Activated T-helper 1 cell treated with anti-CD3 and anti-CD28 coated beads, Interleukin-12 subunit alpha, Interleukin-12 subunit beta, Interleukin-2, Interleukin-4 antibody, amounts not matched to agents 30 ng/mL and 10 ng/mL and 1 ng/mL, durations not matched to agents 14 hours and 24 hours and 36 hours (primary cell): ENCODE measurements at regions of chr4 and their contacts with region 1.

Region 1: DNA sequence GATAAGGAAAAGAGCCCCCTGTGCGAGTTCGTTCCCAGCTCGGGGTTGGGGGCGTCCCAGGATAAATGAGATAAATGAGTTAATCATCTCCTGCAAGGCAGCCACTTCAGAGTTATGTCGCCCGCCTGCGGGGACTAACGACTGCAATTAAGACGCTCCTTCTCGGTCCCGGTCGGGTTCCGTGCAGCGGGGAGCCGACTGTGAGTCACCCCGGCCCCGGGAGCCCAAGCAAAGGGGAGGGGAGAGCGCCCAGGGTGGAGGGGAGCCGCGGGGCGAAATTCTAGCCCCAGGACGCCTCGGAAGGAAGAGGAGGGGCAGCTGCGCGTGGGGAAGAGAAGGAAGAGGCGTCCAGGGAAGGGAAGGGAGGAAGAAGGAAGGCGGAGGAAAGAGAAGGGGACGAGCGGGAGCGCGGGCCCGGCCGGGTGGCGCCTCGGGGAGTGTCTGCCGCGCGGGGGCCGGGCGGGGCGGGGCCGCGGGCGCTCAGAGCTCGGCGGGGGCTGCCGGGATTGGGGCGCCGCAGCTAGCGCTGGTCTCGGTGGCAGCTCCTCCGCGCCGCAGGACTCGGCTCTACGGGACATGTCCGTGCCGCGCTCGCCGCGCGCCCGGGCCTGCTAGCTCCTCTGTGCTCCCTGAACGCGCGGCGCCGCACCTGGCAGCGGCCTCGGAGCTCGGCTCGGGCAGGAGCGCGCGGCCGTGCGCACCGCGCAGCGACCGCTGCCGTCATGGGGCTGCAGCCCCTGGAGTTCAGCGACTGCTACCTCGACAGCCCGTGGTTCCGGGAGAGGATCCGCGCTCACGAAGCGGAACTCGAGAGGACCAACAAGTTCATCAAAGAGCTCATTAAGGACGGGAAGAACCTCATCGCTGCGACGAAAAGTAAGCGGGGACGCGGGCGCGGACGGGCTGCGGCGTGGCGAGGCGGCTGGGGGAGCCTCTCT is at the start of gene ARHGAP10:
- DNase-seq: peak; percentile 49
- H3K4me3 Mint-ChIP-seq: peak within 1 kb of the TSS; percentile 93
- H3K27ac Mint-ChIP-seq: peak within 1 kb of the TSS; percentile 84
- H3K4me1 Mint-ChIP-seq: peaks cover 45% of the 10 kb centered on the region
- H3K27me3 Mint-ChIP-seq: peaks cover 37% of the 10 kb centered on the region
- total RNA-seq, gene ARHGAP10: 7.4 and 8.6 TPM in 2 replicates

Region 2: DNA sequence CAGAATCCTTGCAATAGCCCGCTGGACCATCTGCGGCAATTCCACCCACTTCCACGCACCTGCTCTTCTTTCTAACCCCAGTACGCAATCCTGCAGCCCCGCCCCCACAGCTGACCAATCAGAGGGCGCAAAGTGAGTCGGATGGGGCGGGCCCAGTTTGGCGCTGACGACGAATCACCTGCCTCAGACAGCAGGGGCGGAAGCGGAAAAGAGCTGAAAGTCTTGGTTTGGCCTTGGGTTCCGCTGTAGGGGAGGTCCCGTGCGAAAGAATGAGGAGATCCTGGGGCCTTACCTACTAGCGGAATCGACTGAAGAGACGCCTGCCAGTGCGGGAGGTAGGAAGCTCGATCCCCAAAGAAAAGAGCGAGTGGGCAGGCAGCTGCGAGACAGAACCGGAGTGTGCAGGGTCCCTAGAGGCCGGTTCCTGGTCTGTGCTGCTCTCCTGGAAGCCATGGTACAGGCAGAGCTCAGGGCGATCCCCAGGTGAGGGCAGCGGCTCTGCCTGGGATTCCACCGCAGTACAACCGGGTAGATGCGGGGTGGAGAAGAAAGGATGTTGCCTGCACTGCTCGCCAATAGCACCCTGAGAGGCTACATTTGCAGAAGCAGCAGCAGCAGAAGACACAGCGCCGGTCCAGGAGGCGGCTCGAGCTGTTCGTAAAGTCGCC is 114.5 kb before region 1 on chr4 and contains the start of gene TMEM184C:
- intact Hi-C with region 1: loop called (anchors 1 kb)
- DNase-seq: peak; percentile 97
- H3K4me3 Mint-ChIP-seq: peak within 1 kb of the TSS; percentile 92
- H3K27ac Mint-ChIP-seq: peak within 1 kb of the TSS; percentile 89
- H3K4me1 Mint-ChIP-seq: peaks cover 26% of the 10 kb centered on the region
- H3K27me3 Mint-ChIP-seq: peaks cover 7% of the 10 kb centered on the region
- total RNA-seq, gene TMEM184C: 21.6 and 22.7 TPM in 2 replicates

Region 3: GRCh38 chr4:147707865-147708672 is 23.8 kb before region 1 on chr4:
- intact Hi-C with region 1: loop called (anchors 2 kb)
- DNase-seq: peak; percentile 17
- H3K4me3 Mint-ChIP-seq: no peak overlapping the region
- H3K27ac Mint-ChIP-seq: no peak overlapping the region
- H3K4me1 Mint-ChIP-seq: no peaks in the 10 kb centered on the region
- H3K27me3 Mint-ChIP-seq: peaks cover 4% of the 10 kb centered on the region

Region 4: GRCh38 chr4:147749811-147750321 is 18.0 kb after region 1 on chr4:
- intact Hi-C with region 1: no loop called
- DNase-seq: no peak
- H3K4me3 Mint-ChIP-seq: no peak overlapping the region
- H3K27ac Mint-ChIP-seq: no peak overlapping the region
- H3K4me1 Mint-ChIP-seq: peaks cover 6% of the 10 kb centered on the region
- H3K27me3 Mint-ChIP-seq: no peaks in the 10 kb centered on the region

Region 5: DNA sequence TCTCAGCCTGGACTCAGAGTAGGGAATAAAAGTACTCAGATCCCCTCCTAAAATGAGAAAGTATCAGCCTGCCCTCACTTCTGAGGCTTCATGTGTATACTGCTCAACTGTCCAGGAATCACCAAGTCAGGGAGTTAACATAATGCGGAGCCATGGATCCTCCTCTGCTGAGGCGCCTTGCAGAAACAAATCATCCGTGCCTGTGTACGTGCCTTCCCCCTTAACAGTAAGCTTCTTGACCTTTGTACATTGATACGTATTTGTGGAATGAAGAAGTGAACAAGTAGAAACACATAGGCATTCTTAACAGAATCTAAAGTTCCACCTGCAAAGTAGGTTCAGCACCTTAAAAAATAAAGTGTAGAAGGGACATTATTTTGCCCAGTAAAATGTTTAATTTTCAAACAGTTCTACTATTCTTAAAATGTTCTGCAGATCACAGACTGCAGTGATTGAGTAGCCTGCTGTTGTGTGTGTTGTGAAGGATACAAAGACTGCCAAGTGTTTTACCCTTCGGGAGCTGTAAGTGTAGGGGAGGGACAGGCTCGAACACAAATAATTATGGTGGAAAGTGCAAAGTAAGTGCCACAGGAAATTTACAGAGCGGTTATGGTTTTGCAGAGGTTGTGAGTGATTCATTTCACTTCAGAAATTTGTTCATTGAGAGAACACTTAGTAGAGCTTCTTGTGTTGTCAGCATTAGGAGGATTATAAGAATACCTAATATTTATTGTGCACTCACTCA is 61.9 kb after region 1 on chr4:
- intact Hi-C with region 1: loop called (anchors 1 kb)
- DNase-seq: no peak
- H3K4me3 Mint-ChIP-seq: peak overlapping the region; percentile 61
- H3K27ac Mint-ChIP-seq: peak overlapping the region; percentile 80
- H3K4me1 Mint-ChIP-seq: peaks cover 58% of the 10 kb centered on the region
- H3K27me3 Mint-ChIP-seq: peaks cover 2% of the 10 kb centered on the region

Region 6: GRCh38 chr4:147866532-147867271 is 134.9 kb after region 1 on chr4:
- intact Hi-C with region 1: loop called (anchors 1 kb)
- DNase-seq: peak; percentile 79
- H3K4me3 Mint-ChIP-seq: no peak overlapping the region
- H3K27ac Mint-ChIP-seq: no peak overlapping the region
- H3K4me1 Mint-ChIP-seq: peaks cover 8% of the 10 kb centered on the region
- H3K27me3 Mint-ChIP-seq: no peaks in the 10 kb centered on the region

Region 7: GRCh38 chr4:148441986-148442831 is 710.4 kb after region 1 on chr4 and contains the start of gene NR3C2:
- intact Hi-C with region 1: loop called (anchors 1 kb)
- DNase-seq: peak; percentile 94
- H3K4me3 Mint-ChIP-seq: peak within 1 kb of the TSS; percentile 96
- H3K27ac Mint-ChIP-seq: peak within 1 kb of the TSS; percentile 48
- H3K4me1 Mint-ChIP-seq: peaks cover 23% of the 10 kb centered on the region
- H3K27me3 Mint-ChIP-seq: peaks cover 41% of the 10 kb centered on the region
- total RNA-seq, gene NR3C2: 0.24 and 0.29 TPM in 2 replicates